IMR-90 (cell line): ENCODE measurements at regions of chr3 and their contacts with region 1.

Region 1: GRCh38 chr3:59857589-59858346 is 807.9 kb upstream of the CFAP20DC start:
- DNase-seq: peak; percentile 81
- ATAC-seq: peak; percentile 99
- H3K4me3 ChIP-seq: no peak overlapping the region
- H3K27ac ChIP-seq: no peak overlapping the region
- H3K4me1 ChIP-seq: no peaks in the 10 kb centered on the region
- H3K27me3 ChIP-seq: no peaks in the 10 kb centered on the region
- CTCF ChIP-seq: peak; percentile 96
- POLR2A ChIP-seq: no peak
- RAD21 ChIP-seq: peak; percentile 90

Region 2: DNA sequence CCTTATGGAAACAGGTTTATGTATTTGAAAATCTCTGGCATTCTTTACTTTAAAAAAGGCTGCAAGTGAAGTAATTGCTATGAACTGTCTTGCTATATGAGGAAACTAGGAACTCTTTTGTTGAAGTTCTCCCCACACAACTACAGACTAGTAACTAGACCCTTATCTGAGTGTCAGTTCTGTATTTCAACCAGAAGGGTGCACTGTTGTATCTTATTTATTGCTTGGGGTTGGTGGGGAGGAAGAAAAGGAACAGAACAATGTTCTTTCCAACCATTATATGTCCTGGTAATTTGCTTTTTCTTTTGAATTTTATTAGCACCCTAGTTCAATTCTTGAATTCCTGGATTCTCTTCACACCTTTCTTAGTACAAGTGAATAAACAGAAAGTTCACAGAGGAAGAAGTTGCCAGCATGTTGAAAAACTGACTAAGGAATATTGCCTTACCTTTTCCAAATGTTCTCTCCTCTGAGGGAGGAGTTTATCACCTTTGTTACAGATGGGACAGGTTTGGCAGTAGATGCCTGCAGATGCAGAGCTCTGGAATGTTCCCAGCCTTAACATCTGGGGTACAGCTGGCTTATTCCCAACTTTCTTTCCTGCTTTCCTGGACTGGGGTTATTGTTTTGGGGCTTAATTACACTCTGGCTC is 645.5 kb before region 1 on chr3:
- CTCF ChIA-PET with region 1: no interaction called
- POLR2A ChIA-PET with region 1: no interaction called
- dilution Hi-C with region 1: no loop called
- in situ Hi-C with region 1: loop called (anchors 5 kb)
- intact Hi-C with region 1: loop called (anchors 1 kb)
- DNase-seq: peak; percentile 60
- ATAC-seq: peak; percentile 97
- H3K4me3 ChIP-seq: no peak overlapping the region
- H3K27ac ChIP-seq: no peak overlapping the region
- H3K4me1 ChIP-seq: no peaks in the 10 kb centered on the region; the same call in 1 of the 2 replicates
- H3K27me3 ChIP-seq: no peaks in the 10 kb centered on the region
- CTCF ChIP-seq: peak; percentile 78
- POLR2A ChIP-seq: no peak
- RAD21 ChIP-seq: peak; percentile 85

Region 3: DNA sequence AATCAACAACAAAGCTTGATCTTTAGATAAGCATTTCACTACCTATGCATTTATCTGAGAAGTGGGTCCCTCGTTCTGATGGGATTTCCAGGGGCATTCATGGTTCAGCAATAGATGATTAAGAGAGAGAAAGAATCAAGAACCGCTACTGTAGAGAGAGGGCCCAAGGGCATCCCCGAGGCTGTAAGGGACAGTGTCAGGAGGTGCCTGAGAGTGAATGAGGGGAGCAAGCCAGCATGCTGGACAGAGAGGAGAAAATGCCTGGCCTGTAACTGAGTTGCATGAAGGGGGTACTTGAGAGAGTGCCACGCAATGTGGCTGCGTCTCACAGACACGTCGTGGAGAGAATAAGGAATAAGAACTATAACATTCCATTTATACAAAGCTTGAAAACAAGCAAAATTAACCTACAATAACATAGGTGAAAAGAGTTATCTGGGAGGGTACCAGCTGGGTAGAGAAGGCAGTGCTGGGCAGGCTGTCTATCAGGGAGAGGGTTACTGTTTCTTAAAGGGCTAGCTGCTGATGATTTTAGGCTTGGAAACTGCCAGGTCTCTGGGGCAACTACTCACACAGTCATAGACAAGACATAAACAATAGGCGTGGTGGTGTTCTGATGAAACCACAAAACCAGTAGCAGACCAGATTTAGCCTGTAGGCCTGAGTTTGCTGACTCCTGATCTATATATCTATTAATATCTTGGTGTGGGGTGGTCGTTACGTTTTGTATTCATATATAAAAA is 433.3 kb before region 1 on chr3:
- CTCF ChIA-PET with region 1: no interaction called
- POLR2A ChIA-PET with region 1: no interaction called
- dilution Hi-C with region 1: no loop called
- in situ Hi-C with region 1: no loop called
- intact Hi-C with region 1: loop called (anchors 10 kb)
- DNase-seq: peak; percentile 93
- ATAC-seq: peak; percentile 51
- H3K4me3 ChIP-seq: no peak overlapping the region
- H3K27ac ChIP-seq: peak overlapping the region; percentile 19
- H3K4me1 ChIP-seq: peaks cover 23% of the 10 kb centered on the region
- H3K27me3 ChIP-seq: no peaks in the 10 kb centered on the region; the same call in 1 of the 2 replicates
- CTCF ChIP-seq: no peak
- POLR2A ChIP-seq: no peak
- RAD21 ChIP-seq: no peak

Region 4: DNA sequence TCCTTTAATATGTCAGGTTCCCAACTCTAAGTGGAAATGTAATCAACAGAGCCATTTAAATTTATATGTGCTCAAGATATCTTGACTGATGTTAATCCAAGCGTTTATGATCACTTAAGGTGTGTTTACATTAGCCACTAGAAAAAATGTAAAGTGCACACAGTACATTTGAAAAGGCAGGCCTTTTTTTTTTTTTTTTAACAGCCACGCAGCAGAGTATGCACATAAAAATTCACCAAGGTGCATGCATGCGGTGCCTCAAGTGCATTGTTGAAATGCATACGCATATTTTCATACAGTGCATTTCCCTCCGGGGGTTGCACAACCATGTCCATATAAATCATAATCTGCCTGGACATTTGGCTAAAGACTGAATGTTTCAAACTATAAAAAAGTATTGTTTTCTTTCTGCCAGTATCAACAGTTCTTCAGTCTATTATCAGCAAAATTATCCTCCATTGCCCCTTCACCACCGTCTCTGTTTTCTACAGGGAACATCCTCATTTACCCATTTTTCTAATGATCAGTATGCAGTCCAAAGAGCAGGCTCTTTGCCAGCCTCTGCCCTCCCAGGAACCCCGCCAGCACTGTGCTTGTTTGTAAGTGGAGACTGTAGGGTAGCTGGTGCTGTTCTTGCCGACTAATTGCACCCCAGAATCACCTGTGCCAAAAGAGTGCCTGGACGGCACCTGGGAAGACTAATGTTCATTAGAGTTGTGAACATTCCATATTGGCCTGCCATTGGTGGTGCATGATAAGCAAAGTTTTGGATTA is 196.7 kb before region 1 on chr3:
- CTCF ChIA-PET with region 1: no interaction called
- POLR2A ChIA-PET with region 1: no interaction called
- dilution Hi-C with region 1: no loop called
- in situ Hi-C with region 1: no loop called
- intact Hi-C with region 1: loop called (anchors 10 kb)
- DNase-seq: peak; percentile 8
- ATAC-seq: peak; percentile 9; the same call in 1 of the 2 replicates
- H3K4me3 ChIP-seq: no peak overlapping the region
- H3K27ac ChIP-seq: peak overlapping the region; percentile 84; the same call in 1 of the 2 replicates
- H3K4me1 ChIP-seq: peaks cover 25% of the 10 kb centered on the region
- H3K27me3 ChIP-seq: no peaks in the 10 kb centered on the region
- CTCF ChIP-seq: no peak
- POLR2A ChIP-seq: no peak
- RAD21 ChIP-seq: no peak

Region 5: GRCh38 chr3:60431599-60431958 is 573.8 kb after region 1 on chr3:
- CTCF ChIA-PET with region 1: no interaction called
- POLR2A ChIA-PET with region 1: no interaction called
- dilution Hi-C with region 1: no loop called
- in situ Hi-C with region 1: no loop called
- intact Hi-C with region 1: loop called (anchors 10 kb)
- DNase-seq: peak; percentile 48
- ATAC-seq: peak; percentile 85
- H3K4me3 ChIP-seq: no peak overlapping the region
- H3K27ac ChIP-seq: no peak overlapping the region
- H3K4me1 ChIP-seq: no peaks in the 10 kb centered on the region
- H3K27me3 ChIP-seq: no peaks in the 10 kb centered on the region
- CTCF ChIP-seq: peak; percentile 28
- POLR2A ChIP-seq: no peak
- RAD21 ChIP-seq: peak; percentile 39